ENCODE measurements at regions of chrX and their contacts with region 1.

Region 1: GRCh38 chrX:149286940-149287349 is 218.2 kb downstream of the IDS start:
- DNase-seq: peak; percentile 10
- H3K4me3 Mint-ChIP-seq: no peak overlapping the region
- H3K27ac Mint-ChIP-seq: no peak overlapping the region
- H3K4me1 Mint-ChIP-seq: peaks cover 20% of the 10 kb centered on the region
- H3K27me3 Mint-ChIP-seq: no peaks in the 10 kb centered on the region

Region 2: DNA sequence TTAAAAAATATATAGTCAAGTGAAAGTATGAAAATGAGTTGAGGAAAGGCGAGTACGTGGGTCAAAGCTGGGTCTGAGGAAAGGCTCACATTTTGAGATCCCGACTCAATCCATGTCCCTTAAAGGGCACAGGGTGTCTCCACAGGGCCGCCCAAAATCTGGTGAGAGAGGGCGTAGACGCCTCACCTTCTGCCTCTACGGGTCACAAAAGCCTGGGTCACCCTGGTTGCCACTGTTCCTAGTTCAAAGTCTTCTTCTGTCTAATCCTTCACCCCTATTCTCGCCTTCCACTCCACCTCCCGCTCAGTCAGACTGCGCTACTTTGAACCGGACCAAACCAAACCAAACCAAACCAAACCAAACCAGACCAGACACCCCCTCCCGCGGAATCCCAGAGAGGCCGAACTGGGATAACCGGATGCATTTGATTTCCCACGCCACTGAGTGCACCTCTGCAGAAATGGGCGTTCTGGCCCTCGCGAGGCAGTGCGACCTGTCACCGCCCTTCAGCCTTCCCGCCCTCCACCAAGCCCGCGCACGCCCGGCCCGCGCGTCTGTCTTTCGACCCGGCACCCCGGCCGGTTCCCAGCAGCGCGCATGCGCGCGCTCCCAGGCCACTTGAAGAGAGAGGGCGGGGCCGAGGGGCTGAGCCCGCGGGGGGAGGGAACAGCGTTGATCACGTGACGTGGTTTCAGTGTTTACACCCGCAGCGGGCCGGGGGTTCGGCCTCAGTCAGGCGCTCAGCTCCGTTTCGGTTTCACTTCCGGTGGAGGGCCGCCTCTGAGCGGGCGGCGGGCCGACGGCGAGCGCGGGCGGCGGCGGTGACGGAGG is 1375.5 kb before region 1 on chrX and contains the start of gene FMR1:
- intact Hi-C with region 1: loop called (anchors 10 kb)
- DNase-seq: peak; percentile 92
- H3K4me3 Mint-ChIP-seq: peak within 1 kb of the TSS; percentile 95
- H3K27ac Mint-ChIP-seq: peak within 1 kb of the TSS; percentile 86
- H3K4me1 Mint-ChIP-seq: peaks cover 27% of the 10 kb centered on the region
- H3K27me3 Mint-ChIP-seq: peaks cover 3% of the 10 kb centered on the region
- total RNA-seq, gene FMR1: 34.7 TPM in 2 replicates

Region 3: DNA sequence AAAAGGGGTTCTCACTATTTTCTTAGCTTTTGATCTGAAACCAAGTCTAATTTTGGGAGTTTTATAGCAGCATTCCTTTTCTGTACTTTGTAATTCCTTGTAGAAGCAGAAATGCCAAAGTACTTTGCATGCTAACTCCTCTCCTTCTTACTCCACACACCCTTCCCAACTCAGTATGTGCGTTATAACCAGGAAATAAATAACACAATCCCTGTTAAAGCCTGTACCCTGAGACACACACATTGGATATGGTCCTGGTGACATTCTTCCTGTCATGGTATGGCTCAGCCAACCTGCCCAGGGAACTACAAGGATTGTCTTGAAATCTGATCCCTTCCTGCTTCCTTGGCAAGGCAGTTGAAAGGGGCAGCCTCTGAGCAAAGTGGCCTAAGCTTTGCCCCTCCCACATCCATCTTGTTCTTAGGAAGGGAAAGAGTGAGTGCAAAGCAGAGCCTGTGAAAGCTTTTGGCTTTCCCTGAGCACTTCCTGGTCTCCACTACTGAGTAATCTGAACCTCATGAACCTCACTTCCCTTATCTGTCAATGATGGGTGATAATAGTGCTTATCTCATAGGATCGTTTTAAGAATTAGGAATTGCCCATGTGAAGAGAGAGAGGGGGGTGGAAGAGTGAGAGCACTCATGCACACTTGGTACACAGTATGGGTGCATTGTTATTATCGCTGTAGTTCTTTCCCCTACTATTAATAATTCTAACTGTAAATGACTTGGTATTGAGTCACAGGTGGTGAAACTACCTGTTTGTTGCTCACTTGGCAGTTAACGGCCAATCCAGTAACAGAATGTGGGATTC is 677.2 kb before region 1 on chrX:
- intact Hi-C with region 1: loop called (anchors 1 kb)
- DNase-seq: no peak
- H3K4me3 Mint-ChIP-seq: no peak overlapping the region
- H3K27ac Mint-ChIP-seq: peak overlapping the region; percentile 17
- H3K4me1 Mint-ChIP-seq: peaks cover 26% of the 10 kb centered on the region
- H3K27me3 Mint-ChIP-seq: no peaks in the 10 kb centered on the region

Region 4: GRCh38 chrX:149198980-149199732 is 87.8 kb before region 1 on chrX:
- intact Hi-C with region 1: loop called (anchors 1 kb)
- DNase-seq: no peak
- H3K4me3 Mint-ChIP-seq: no peak overlapping the region
- H3K27ac Mint-ChIP-seq: peak overlapping the region; percentile 76
- H3K4me1 Mint-ChIP-seq: peaks cover 15% of the 10 kb centered on the region
- H3K27me3 Mint-ChIP-seq: no peaks in the 10 kb centered on the region

Region 5: GRCh38 chrX:149267878-149268813 is 18.8 kb before region 1 on chrX:
- intact Hi-C with region 1: loop called (anchors 2 kb)
- DNase-seq: no peak
- H3K4me3 Mint-ChIP-seq: no peak overlapping the region
- H3K27ac Mint-ChIP-seq: peak overlapping the region; percentile 0
- H3K4me1 Mint-ChIP-seq: peaks cover 9% of the 10 kb centered on the region
- H3K27me3 Mint-ChIP-seq: no peaks in the 10 kb centered on the region

Region 6: DNA sequence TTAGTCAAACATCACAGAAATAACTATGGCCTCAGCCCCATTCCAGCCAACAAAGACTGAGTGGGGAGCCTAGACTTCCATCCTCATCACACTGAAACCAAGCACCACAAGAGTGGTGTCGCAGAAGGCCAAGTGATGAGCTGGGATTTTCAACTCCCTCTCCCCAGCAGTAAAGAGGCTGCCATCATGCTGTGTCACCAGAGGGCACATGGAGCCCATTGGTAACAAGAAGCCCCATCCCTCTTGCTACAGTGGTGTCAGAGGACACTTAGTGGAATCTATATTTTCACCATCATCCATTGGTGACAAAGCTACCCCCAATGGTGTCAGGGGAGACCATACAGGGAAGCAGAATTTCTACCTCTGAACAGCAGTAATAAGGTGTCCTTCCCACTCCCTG is 19.5 kb after region 1 on chrX:
- intact Hi-C with region 1: no loop called
- DNase-seq: no peak
- H3K4me3 Mint-ChIP-seq: no peak overlapping the region
- H3K27ac Mint-ChIP-seq: no peak overlapping the region
- H3K4me1 Mint-ChIP-seq: no peaks in the 10 kb centered on the region
- H3K27me3 Mint-ChIP-seq: no peaks in the 10 kb centered on the region

Region 7: DNA sequence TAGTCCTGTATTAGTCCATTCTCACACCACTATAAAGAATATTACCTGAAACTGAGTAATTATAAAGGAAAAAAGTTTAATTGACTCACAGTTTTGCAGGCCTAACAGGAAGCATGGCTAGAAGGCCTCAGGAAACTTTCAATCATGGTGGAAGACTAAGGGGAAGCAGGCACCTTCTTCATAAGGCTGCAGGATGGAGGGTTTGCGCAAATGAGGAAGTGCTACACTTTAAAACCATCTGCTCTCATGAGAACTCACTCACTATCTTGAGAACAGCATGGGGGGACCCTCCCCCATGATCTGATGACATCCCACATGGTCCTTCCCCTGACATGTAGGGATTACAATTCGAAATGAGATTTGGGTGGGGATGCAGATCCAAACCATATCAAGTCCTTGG is 412.8 kb after region 1 on chrX:
- intact Hi-C with region 1: no loop called
- DNase-seq: no peak
- H3K4me3 Mint-ChIP-seq: no peak overlapping the region
- H3K27ac Mint-ChIP-seq: no peak overlapping the region
- H3K4me1 Mint-ChIP-seq: no peaks in the 10 kb centered on the region
- H3K27me3 Mint-ChIP-seq: no peaks in the 10 kb centered on the region

Measured in activated T-helper 2 cell treated with anti-CD3 and anti-CD28 coated beads, Interferon-gamma antibody, Interleukin-2, Interleukin-4, amounts not matched to agents 10 μg/mL and 5 μg/mL and 100 μg/mL, durations not matched to agents 14 hours and 24 hours and 36 hours (primary cell).